Sciatic nerve (tissue), 2 donors: ENCODE measurements at regions of chr13 and their contacts with region 1.

Region 1: DNA sequence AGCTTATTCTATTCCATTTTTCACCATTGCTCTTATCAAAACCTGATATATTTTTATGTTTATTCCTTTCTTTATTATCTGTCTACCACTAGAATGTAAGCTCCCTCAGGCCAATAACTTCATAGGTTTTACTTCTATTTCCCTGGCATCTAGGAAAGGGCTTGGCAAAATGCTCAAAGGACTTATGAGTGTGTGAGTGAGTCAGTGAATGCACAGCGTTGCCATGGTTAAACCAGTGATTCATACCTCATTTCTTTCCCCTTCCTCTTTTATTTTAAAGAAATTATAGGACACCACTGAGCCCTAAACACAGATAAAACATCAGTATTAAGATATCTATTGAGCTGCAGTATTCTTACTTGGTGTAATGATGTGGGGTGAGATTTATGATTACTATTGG is 162.1 kb downstream of the GPC6 start:
- DNase-seq: no peak
- ATAC-seq: no peak

Region 2: DNA sequence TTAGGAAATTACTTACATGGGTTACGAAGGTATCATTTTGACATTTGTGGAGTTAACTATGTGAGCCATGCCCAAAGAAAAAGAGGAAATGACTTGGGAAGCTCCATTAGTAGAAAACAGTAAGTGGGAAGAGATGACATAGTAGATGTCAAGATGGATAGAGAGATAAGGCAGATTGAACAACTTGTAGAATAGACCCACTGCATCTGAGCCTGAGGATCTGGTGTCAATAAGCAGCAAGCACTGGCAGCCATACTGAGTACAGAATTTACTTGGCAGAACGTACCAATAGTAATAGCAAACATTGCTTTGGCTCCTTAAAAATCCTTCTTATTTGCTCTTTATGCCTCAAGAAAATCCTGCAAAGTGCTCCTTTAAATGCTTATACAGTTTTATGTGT is 41.7 kb after region 1 on chr13:
- intact Hi-C with region 1: loop called (anchors 1 kb)
- DNase-seq: no peak
- ATAC-seq: no peak

Region 3: DNA sequence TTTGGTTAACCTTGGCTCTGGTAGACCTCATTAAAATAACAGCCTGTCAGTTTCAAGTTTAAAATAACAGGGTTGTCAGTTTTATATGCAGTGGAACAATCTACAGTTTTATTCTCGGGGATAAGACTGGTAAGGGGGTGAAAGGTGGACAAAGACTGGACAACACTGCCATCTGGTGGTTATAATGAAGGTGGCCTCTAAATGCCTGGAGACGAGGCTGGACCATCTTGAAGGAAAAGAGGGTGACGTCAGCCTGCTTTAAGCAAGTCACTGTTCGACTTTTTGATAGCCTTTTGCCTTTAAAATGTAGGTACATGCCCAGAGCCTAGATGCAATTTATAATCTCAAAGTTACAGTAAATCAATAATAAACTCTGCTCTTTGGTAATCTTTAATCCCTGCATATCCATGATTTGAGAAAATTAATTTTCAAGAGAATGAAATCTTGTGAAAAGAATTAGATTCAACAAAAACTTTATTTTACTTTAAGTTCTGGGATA is 973.8 kb after region 1 on chr13:
- intact Hi-C with region 1: no loop called
- DNase-seq: no peak
- ATAC-seq: peak; percentile 96